Caki2 (cell line): ENCODE measurements at regions of chr22 and their contacts with region 1.

Region 1: GRCh38 chr22:46296257-46297150 is at the start of gene GTSE1:
- DNase-seq: peak; percentile 96
- total RNA-seq, gene GTSE1: 27.6 and 29.8 TPM in 2 replicates

Region 2: GRCh38 chr22:46013460-46014416 is 282.8 kb before region 1 on chr22:
- in situ Hi-C with region 1: loop called (anchors 25 kb)
- DNase-seq: peak; percentile 98

Region 3: DNA sequence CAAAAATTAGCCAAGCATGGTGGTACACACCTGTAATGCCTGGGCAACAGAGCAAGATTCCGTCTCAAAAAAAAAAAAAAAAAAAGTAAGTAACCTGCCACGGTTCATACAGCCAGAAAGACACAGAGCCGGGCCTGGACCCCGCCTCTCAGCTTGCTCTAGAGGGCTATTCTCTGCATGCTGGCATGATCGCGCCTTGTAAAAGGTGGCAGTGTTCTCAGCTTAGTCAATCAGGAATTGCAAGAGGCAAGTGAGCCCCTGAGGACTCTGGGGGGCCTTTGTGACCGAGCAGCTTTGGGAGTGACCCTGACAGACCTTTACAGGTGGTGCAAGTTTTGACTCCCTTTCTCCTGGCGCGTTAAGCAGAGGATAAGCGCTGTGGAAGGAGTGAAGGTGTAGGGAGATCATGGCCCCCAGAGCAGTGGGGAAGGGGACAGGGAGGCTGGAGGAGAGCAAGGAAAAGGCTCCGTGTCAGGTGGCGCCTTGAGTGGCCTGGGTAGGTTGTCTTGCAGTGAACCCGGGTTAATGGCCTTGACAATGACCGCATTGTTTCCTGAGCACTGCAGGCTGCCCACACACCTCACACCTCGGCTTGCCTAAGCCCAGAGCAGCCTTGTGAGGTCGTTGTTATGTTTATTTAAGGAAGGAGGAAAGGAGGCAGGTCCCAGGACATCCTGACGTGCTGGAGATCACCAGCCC is 95.3 kb before region 1 on chr22:
- in situ Hi-C with region 1: no loop called
- DNase-seq: no peak

Region 4: GRCh38 chr22:46377566-46378425 is 81.3 kb after region 1 on chr22:
- in situ Hi-C with region 1: no loop called
- DNase-seq: peak; percentile 99